Body of pancreas (tissue), 4 donors: ENCODE measurements at regions of chr5 and their contacts with region 1.

Region 1: GRCh38 chr5:112551419-112552032 is 132.4 kb upstream of the EPB41L4A start:
- DNase-seq: peak; percentile 43 to 71 (median 52)
- ATAC-seq: peak; percentile 78
- H3K4me3 ChIP-seq: no peak overlapping the region
- H3K27ac ChIP-seq: no peak overlapping the region
- H3K4me1 ChIP-seq: no peaks in the 10 kb centered on the region
- H3K27me3 ChIP-seq: no peaks in the 10 kb centered on the region
- CTCF ChIP-seq: peak; percentile 56 to 92 (median 80)
- POLR2A ChIP-seq: no peak

Region 2: DNA sequence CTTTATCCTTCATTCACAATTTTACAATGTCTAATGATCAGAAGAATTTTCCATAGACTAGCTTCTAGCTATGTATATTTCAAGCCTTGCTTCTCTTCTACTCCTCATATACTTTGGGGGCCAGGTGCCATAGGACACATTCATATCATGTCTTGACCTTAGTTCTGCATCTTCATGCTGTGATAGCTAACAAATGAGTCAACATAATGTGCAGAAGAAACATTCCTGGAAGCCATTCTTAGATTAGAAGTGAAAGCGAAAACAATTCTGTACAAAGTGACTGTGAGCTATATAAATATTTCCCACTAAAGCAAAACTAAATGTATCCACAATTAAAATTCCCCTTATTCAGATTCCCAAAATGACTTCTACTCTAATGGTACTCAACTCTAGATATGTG is 474.3 kb before region 1 on chr5:
- intact Hi-C with region 1: no loop called
- DNase-seq: no peak
- ATAC-seq: no peak
- H3K4me3 ChIP-seq: no peak overlapping the region
- H3K27ac ChIP-seq: no peak overlapping the region
- H3K4me1 ChIP-seq: no peaks in the 10 kb centered on the region
- H3K27me3 ChIP-seq: no peaks in the 10 kb centered on the region
- CTCF ChIP-seq: no peak
- POLR2A ChIP-seq: no peak

Region 3: GRCh38 chr5:112742424-112742823 is 190.9 kb after region 1 on chr5:
- intact Hi-C with region 1: no loop called
- DNase-seq: no peak
- ATAC-seq: no peak
- H3K4me3 ChIP-seq: no peak overlapping the region
- H3K27ac ChIP-seq: no peak overlapping the region
- H3K4me1 ChIP-seq: peaks cover 9% of the 10 kb centered on the region
- H3K27me3 ChIP-seq: no peaks in the 10 kb centered on the region
- CTCF ChIP-seq: no peak
- POLR2A ChIP-seq: no peak

Region 4: GRCh38 chr5:112757468-112758208 is 206.1 kb after region 1 on chr5:
- intact Hi-C with region 1: loop called (anchors 5 kb)
- DNase-seq: no peak
- ATAC-seq: peak; percentile 81
- H3K4me3 ChIP-seq: no peak overlapping the region
- H3K27ac ChIP-seq: no peak overlapping the region
- H3K4me1 ChIP-seq: peaks cover 3% of the 10 kb centered on the region
- H3K27me3 ChIP-seq: no peaks in the 10 kb centered on the region
- CTCF ChIP-seq: peak; percentile 47 to 93 (median 88)
- POLR2A ChIP-seq: no peak

Region 5: GRCh38 chr5:112848116-112848811 is 296.7 kb after region 1 on chr5:
- intact Hi-C with region 1: no loop called
- DNase-seq: peak in 2 of 4 donors; percentile 12 to 30
- ATAC-seq: peak; percentile 92
- H3K4me3 ChIP-seq: no peak overlapping the region
- H3K27ac ChIP-seq: no peak overlapping the region
- H3K4me1 ChIP-seq: peaks cover 9% of the 10 kb centered on the region
- H3K27me3 ChIP-seq: no peaks in the 10 kb centered on the region
- CTCF ChIP-seq: peak; percentile 42 to 80 (median 69)
- POLR2A ChIP-seq: no peak